ENCODE measurements at regions of chr10 and their contacts with region 1.

Region 1: DNA sequence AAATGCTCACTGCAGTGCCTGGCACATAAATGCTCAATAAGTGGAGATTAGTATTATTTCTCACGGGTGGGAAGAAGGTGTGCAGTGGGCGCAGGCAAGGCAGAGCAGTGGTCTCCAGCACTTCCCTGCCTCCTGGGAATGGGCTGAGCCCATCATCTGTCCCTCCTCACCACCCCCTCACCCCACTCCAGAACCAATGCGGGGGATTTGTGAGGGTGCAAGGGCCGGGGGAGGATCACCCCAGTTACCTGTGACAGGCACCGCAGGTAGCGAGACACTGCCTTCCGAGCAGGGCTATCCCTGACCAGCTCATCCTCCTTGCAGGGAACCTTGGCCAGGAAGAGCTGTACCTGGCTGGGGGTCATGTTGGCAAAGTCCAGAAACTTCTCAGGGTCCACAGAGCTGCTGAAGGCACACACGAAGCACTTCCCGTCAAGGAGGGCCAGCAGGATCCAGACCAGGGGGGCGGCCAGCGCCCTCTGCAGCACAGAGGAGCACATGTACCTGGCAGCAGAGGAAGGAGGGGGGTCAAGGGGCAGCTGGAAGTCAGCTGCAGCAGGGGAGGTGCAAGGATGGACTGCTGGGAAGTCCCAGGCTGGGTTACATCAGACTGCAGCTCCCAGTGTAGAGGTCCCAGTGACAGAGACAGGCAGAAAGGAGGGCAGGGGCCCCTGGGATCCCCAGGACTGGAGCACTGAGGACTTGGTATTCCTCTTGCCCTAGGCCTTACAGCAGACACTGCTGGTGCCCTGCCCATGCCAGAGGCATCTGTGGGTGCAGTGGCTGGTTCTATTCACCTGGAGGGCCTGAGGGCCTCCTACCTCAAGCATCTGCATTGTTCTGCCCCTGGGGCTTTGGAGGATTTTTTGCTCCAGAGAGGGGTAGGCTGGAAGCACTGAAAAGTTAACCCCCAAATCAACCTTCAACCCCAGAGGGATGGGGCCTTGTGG is 2.7 kb downstream of the CALHM3 start:
- DNase-seq: no peak
- CTCF ChIP-seq: peak; percentile 63

Region 2: DNA sequence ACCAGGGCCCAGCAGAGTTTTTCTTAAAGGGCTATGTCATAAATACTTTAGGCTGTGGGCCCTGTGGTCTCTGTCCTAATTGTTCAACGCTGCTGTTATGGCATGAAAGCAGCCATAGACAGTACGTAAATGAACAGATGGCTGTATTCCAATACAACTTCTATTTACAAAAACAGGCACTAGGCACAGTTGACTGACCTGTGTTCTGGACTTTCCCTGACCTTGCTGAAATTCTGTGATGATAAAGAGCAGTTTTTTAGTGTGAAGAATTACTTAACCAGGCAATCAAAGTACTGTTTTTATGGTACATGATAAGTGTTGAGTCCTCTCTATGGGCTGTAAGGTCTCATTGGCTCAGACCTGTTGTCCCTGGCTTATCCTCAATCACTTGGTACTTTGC is 62.8 kb before region 1 on chr10:
- in situ Hi-C with region 1: loop called (anchors 5 kb)
- DNase-seq: no peak
- CTCF ChIP-seq: no peak